Prostate gland (tissue), 2 donors: ENCODE measurements at regions of chr5 and their contacts with region 1.

Region 1: GRCh38 chr5:43313035-43313853 is at the start of gene HMGCS1:
- DNase-seq: peak; percentile 98
- H3K4me3 ChIP-seq: peak within 1 kb of the TSS; percentile 68 to 81
- H3K27ac ChIP-seq: peak within 1 kb of the TSS; percentile 90 to 92
- H3K4me1 ChIP-seq: no peaks in the 10 kb centered on the region
- H3K27me3 ChIP-seq: no peaks in the 10 kb centered on the region
- CTCF ChIP-seq: peak in 2 of 4 experiments; percentile 6 to 12
- POLR2A ChIP-seq: peak; percentile 99
- total RNA-seq, gene HMGCS1: 15.5 to 29.2 TPM

Region 2: GRCh38 chr5:43066799-43067741 is 246.2 kb before region 1 on chr5:
- intact Hi-C with region 1: loop called (anchors 10 kb)
- DNase-seq: peak; percentile 92
- H3K4me3 ChIP-seq: peak overlapping the region; percentile 62 to 77
- H3K27ac ChIP-seq: peak overlapping the region; percentile 98 to 99
- H3K4me1 ChIP-seq: peaks cover 5% of the 10 kb centered on the region
- H3K27me3 ChIP-seq: no peaks in the 10 kb centered on the region
- CTCF ChIP-seq: peak in 1 of 4 experiments; percentile 12
- POLR2A ChIP-seq: peak; percentile 60

Region 3: GRCh38 chr5:43105369-43106289 is 207.6 kb before region 1 on chr5:
- intact Hi-C with region 1: loop called (anchors 5 kb)
- DNase-seq: peak; percentile 89
- H3K4me3 ChIP-seq: peak overlapping the region; percentile 15 to 31
- H3K27ac ChIP-seq: peak overlapping the region; percentile 64 to 73
- H3K4me1 ChIP-seq: no peaks in the 10 kb centered on the region
- H3K27me3 ChIP-seq: no peaks in the 10 kb centered on the region
- CTCF ChIP-seq: peak; percentile 98 to 99 (median 98)
- POLR2A ChIP-seq: no peak

Region 4: DNA sequence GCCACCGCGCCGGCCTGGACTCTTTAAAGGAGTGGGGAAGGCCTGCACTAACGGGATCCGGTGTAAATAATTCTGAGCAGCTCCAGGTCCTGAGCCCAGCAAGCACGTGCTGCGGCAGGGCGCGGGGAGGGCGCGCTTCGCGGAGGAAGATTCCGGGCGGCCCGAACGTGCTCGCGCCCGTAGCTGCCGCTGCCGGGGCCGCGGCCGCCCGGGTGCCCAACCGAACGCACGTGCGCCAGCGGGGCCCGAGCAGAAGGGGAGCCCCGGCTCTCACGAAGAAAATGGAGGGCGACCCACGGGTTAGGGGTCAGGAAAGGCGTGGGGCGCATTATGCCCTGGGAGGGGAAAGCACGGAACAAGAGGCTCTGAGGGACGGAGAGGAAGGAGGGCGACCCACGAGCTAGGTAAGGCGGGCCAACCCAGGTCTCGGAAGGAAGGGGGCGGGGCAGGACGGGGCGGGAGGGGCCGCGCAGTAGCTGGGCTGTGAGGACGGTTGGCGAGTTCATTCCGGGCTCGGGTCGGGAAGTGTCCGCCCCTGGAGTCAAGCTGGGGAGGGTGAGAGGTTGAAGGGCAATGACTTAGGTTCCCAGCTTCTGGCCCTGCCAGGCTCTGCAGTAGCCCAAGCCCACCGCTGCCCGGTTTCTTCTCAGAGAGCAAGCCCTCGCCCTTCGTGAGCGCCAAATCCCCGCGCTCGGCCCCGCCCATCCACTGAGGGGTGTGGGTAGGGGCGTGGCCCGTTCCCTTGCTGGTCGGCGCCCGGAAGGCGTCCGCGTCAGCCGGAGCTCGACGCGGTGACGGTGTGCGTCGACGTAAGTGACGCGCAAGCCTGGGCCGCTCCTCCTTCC is 192.3 kb before region 1 on chr5 and contains the start of gene ZNF131:
- intact Hi-C with region 1: loop called (anchors 5 kb)
- DNase-seq: peak; percentile 95
- H3K4me3 ChIP-seq: peak within 1 kb of the TSS; percentile 73 to 93
- H3K27ac ChIP-seq: peak within 1 kb of the TSS; percentile 99 to 100
- H3K4me1 ChIP-seq: no peaks in the 10 kb centered on the region
- H3K27me3 ChIP-seq: no peaks in the 10 kb centered on the region
- CTCF ChIP-seq: peak in 2 of 4 experiments; percentile 9 to 29
- POLR2A ChIP-seq: peak; percentile 68
- total RNA-seq, gene ZNF131: 33.9 to 40.3 TPM

Region 5: GRCh38 chr5:43484106-43484849 is 171.0 kb after region 1 on chr5:
- intact Hi-C with region 1: loop called (anchors 5 kb)
- DNase-seq: peak; percentile 81
- H3K4me3 ChIP-seq: peak overlapping the region; percentile 76 to 93
- H3K27ac ChIP-seq: peak overlapping the region; percentile 95 to 96
- H3K4me1 ChIP-seq: no peaks in the 10 kb centered on the region
- H3K27me3 ChIP-seq: no peaks in the 10 kb centered on the region
- CTCF ChIP-seq: peak; percentile 52 to 81 (median 74)
- POLR2A ChIP-seq: no peak

Region 6: GRCh38 chr5:44808435-44809214 is 1495.4 kb after region 1 on chr5 and contains the start of gene MRPS30:
- intact Hi-C with region 1: loop called (anchors 5 kb)
- DNase-seq: peak; percentile 97
- H3K4me3 ChIP-seq: peak within 1 kb of the TSS; percentile 77 to 80
- H3K27ac ChIP-seq: peak within 1 kb of the TSS; percentile 80 to 81
- H3K4me1 ChIP-seq: no peaks in the 10 kb centered on the region
- H3K27me3 ChIP-seq: no peaks in the 10 kb centered on the region
- CTCF ChIP-seq: peak in 3 of 4 experiments; percentile 22 to 43 (median 36)
- POLR2A ChIP-seq: peak; percentile 70
- total RNA-seq, gene MRPS30: 77.7 to 78.0 TPM